ENCODE measurements at regions of chr13 and their contacts with region 1.

Region 1: DNA sequence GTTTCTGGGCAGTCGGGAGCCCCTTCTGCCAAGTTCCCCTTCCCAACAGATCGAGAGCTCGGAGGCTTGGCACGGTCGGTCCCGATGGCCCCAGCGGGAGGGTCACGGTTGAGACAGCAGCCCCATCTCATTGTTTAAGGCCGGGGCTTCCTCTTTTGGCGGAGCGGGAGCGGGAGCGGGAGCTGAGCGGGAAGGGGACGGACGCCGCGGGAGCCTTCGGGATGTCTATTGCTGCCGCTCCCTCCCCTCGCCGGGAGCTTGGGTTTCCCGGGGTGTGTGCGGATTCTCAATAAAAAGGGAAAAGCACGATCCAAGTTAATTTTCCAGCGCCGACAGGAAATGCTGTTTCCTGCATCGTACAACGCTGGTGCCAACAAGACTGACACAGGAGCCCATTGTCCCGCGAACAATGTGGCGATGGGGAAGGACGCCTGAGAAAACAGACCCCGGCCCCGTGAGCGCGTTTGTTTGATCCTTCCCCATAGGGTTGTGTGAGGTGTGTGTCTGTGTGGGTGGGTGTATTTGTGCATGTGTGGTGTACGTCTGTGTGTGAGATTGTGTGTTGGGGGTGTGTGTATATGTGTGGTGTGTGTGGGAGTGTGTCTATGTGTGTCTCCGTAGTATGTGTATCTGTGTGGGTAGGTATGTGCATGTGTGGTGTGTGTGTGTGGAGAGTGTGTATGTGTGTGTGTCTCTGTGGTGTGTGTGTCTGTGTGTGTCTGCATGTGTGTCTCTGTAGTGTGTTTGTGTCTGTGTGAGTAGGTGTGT is 36.3 kb upstream of the FLT1 start:
- DNase-seq: no peak
- ATAC-seq: no peak
- H3K4me3 Mint-ChIP-seq: no peak overlapping the region
- H3K27ac Mint-ChIP-seq: no peak overlapping the region
- H3K4me1 Mint-ChIP-seq: peaks cover 30% of the 10 kb centered on the region
- H3K27me3 Mint-ChIP-seq: peaks cover 32% of the 10 kb centered on the region
- CTCF ChIP-seq: no peak

Region 2: GRCh38 chr13:28423010-28423409 is 108.3 kb before region 1 on chr13:
- CTCF ChIA-PET with region 1: no interaction called
- POLR2A ChIA-PET with region 1: no interaction called
- intact Hi-C with region 1: loop called (anchors 2 kb)
- DNase-seq: peak; percentile 48
- ATAC-seq: peak; percentile 99
- H3K4me3 Mint-ChIP-seq: peak overlapping the region; percentile 76
- H3K27ac Mint-ChIP-seq: peak overlapping the region; percentile 85
- H3K4me1 Mint-ChIP-seq: peaks cover 28% of the 10 kb centered on the region
- H3K27me3 Mint-ChIP-seq: no peaks in the 10 kb centered on the region
- CTCF ChIP-seq: no peak

Region 3: GRCh38 chr13:28494776-28495537 is 36.3 kb before region 1 on chr13 and contains the start of gene FLT1:
- CTCF ChIA-PET with region 1: no interaction called
- POLR2A ChIA-PET with region 1: no interaction called
- intact Hi-C with region 1: loop called (anchors 5 kb)
- DNase-seq: peak; percentile 35
- ATAC-seq: peak; percentile 42
- H3K4me3 Mint-ChIP-seq: peak within 1 kb of the TSS; percentile 71
- H3K27ac Mint-ChIP-seq: no peak within 1 kb of the TSS
- H3K4me1 Mint-ChIP-seq: peaks cover 16% of the 10 kb centered on the region
- H3K27me3 Mint-ChIP-seq: peaks cover 29% of the 10 kb centered on the region
- CTCF ChIP-seq: no peak
- total RNA-seq, gene FLT1: 0.46 and 1.3 TPM in 2 replicates

Region 4: DNA sequence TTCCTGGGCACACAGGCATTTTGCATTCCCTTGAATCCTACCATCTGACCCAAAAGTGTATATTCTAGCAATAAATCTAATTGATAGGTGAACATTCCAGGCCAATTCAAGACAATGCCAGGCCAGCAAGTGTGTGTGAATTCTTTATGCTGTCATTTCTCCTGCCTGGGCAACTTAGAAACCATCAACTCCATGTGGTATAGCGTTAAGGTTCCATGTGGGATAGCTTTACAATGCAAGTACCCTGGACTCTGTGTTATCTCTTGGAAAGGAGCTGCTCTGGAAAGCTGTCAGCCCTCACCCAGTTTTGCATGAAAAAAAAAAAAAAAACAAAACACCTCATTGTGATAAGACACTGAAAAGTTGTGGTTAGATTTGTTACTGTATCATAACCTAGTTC is 20.7 kb before region 1 on chr13:
- CTCF ChIA-PET with region 1: no interaction called
- POLR2A ChIA-PET with region 1: no interaction called
- intact Hi-C with region 1: no loop called
- DNase-seq: no peak
- ATAC-seq: no peak
- H3K4me3 Mint-ChIP-seq: no peak overlapping the region
- H3K27ac Mint-ChIP-seq: no peak overlapping the region
- H3K4me1 Mint-ChIP-seq: peaks cover 1% of the 10 kb centered on the region
- H3K27me3 Mint-ChIP-seq: no peaks in the 10 kb centered on the region
- CTCF ChIP-seq: no peak

Region 5: GRCh38 chr13:28636674-28637317 is 105.5 kb after region 1 on chr13:
- CTCF ChIA-PET with region 1: no interaction called
- POLR2A ChIA-PET with region 1: no interaction called
- intact Hi-C with region 1: loop called (anchors 5 kb)
- DNase-seq: no peak
- ATAC-seq: peak; percentile 74
- H3K4me3 Mint-ChIP-seq: peak overlapping the region; percentile 66
- H3K27ac Mint-ChIP-seq: peak overlapping the region; percentile 74
- H3K4me1 Mint-ChIP-seq: peaks cover 36% of the 10 kb centered on the region
- H3K27me3 Mint-ChIP-seq: no peaks in the 10 kb centered on the region
- CTCF ChIP-seq: no peak

Region 6: DNA sequence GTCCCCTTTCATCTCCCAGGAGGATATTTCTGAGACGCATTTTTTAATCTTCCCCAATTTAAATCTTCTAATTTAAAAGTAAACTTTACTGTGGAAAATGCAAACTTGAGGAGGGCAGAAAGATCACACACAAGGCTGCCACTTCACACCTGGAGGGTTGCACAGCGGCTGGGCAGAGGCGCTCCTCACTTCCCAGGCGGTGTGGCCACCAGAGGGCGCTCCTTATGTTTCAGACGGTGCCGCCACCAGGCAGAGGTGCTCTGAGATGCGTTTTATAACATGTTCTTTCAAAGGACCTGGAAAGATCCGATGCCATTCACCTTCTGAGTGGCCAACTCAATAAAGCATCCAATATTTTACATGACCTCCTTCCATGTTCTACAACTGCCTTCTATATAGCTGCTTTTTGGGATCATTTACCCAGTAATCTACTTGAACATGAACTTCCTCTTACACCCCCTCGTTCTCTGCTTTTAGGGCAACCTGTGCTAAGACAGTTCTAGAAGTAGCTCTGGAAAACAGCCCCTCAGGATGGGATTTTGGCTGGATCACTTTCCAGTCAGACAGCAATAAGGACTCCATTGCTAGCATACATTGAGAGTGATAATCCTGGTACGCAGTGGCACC is 274.0 kb after region 1 on chr13:
- CTCF ChIA-PET with region 1: no interaction called
- POLR2A ChIA-PET with region 1: no interaction called
- intact Hi-C with region 1: no loop called
- DNase-seq: no peak
- ATAC-seq: no peak
- H3K4me3 Mint-ChIP-seq: no peak overlapping the region
- H3K27ac Mint-ChIP-seq: no peak overlapping the region
- H3K4me1 Mint-ChIP-seq: no peaks in the 10 kb centered on the region
- H3K27me3 Mint-ChIP-seq: peaks cover 23% of the 10 kb centered on the region
- CTCF ChIP-seq: no peak